Esophagus muscularis mucosa (tissue), 4 donors: ENCODE measurements at regions of chr3 and their contacts with region 1.

Region 1: GRCh38 chr3:129045675-129046036 is 14.9 kb upstream of the GP9 start:
- DNase-seq: no peak
- H3K4me3 ChIP-seq: peak overlapping the region; percentile 37 to 51 (median 40)
- H3K27ac ChIP-seq: no peak overlapping the region
- H3K4me1 ChIP-seq: peaks cover 9 to 11% (median 10%) of the 10 kb centered on the region in 4 donors
- H3K27me3 ChIP-seq: peaks cover 0 to 21% (median 4%) of the 10 kb centered on the region in 4 donors
- CTCF ChIP-seq: no peak
- EP300 ChIP-seq: no peak
- POLR2A ChIP-seq: no peak

Region 2: DNA sequence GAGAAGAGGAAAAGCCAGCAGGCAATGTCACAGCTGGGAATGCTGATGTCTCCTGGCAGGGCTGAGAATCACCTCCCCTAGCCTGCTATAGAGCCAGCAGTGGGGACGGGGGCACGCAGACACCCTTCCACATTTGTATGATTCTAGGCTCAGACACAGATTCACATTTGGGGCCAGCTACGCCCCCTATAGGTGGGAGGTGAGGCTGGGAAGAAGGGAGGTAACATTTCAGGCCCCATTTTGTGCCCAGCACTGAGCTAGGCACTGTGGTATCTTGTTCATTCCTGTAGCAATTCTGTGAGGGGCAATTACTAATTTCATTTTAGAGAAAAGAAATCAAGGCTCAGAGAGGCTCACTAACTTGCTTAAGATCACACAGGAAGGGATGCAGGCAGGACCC is 182.1 kb before region 1 on chr3:
- intact Hi-C with region 1: no loop called
- DNase-seq: no peak
- H3K4me3 ChIP-seq: no peak overlapping the region
- H3K27ac ChIP-seq: no peak overlapping the region
- H3K4me1 ChIP-seq: peaks cover 0 to 17% (median 10%) of the 10 kb centered on the region in 4 donors
- H3K27me3 ChIP-seq: no peaks in the 10 kb centered on the region
- CTCF ChIP-seq: peak in 1 of 3 experiments; percentile 15
- EP300 ChIP-seq: no peak
- POLR2A ChIP-seq: no peak

Region 3: DNA sequence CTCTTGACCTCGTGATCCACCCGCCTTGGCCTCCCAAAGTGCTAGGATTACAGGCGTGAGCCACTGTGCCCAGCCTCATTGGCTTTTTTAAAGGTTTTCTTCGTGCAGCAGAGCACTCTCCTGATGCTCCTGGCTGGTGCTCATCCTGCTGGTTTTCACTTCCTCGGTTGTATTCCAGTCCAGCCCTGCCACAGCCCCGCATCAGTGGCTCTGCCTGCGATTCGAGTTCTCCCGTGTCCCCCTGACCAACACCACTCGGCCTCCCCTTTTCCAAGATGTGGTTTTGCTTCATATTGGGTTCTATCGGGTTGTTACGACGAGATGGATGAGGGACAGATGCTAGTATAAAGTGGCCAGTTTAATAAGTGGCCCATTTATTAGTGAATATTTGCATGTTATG is 16.8 kb before region 1 on chr3:
- intact Hi-C with region 1: loop called (anchors 2 kb)
- DNase-seq: no peak
- H3K4me3 ChIP-seq: no peak overlapping the region
- H3K27ac ChIP-seq: no peak overlapping the region
- H3K4me1 ChIP-seq: peaks cover 23 to 39% (median 31%) of the 10 kb centered on the region in 4 donors
- H3K27me3 ChIP-seq: no peaks in the 10 kb centered on the region
- CTCF ChIP-seq: no peak
- EP300 ChIP-seq: no peak
- POLR2A ChIP-seq: no peak

Region 4: DNA sequence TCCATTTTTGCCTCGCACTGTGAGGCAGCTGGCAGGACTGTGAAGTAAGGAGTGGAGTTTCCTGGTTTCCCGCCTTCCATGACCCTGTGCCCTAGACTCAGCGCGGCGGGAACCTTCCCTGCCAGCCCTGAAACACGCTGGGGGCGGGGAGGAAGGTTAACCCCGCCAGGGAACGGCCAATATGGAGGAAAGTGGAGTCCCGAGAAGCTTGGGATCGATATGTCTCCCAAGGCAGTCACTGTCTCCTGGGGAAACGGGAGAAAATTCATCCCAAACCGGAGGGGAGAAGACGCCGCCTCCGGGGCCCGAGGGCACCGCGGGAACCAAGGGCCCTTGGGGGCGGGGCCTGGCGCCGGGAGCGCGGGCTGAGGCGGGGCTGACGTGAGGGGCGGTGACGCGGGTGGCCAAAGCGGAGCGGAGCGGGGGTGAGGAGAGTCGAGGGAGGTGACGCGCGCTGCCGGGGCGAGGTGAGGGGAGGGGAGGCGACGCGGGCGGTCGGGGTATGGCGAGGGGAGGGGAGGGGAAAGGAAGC is 232.8 kb after region 1 on chr3 and contains the start of gene HMCES:
- intact Hi-C with region 1: no loop called
- DNase-seq: peak; percentile 98
- H3K4me3 ChIP-seq: peak within 1 kb of the TSS; percentile 74 to 99 (median 83)
- H3K27ac ChIP-seq: peak within 1 kb of the TSS; percentile 93 to 97 (median 95)
- H3K4me1 ChIP-seq: peaks cover 15 to 42% (median 34%) of the 10 kb centered on the region in 4 donors
- H3K27me3 ChIP-seq: no peaks in the 10 kb centered on the region
- CTCF ChIP-seq: peak in 1 of 3 experiments; percentile 9
- EP300 ChIP-seq: no peak
- POLR2A ChIP-seq: peak; percentile 40
- total RNA-seq, gene HMCES: 24.5 to 39.3 (median 30.6) TPM